ENCODE measurements at regions of chr10 and their contacts with region 1.

Region 1: DNA sequence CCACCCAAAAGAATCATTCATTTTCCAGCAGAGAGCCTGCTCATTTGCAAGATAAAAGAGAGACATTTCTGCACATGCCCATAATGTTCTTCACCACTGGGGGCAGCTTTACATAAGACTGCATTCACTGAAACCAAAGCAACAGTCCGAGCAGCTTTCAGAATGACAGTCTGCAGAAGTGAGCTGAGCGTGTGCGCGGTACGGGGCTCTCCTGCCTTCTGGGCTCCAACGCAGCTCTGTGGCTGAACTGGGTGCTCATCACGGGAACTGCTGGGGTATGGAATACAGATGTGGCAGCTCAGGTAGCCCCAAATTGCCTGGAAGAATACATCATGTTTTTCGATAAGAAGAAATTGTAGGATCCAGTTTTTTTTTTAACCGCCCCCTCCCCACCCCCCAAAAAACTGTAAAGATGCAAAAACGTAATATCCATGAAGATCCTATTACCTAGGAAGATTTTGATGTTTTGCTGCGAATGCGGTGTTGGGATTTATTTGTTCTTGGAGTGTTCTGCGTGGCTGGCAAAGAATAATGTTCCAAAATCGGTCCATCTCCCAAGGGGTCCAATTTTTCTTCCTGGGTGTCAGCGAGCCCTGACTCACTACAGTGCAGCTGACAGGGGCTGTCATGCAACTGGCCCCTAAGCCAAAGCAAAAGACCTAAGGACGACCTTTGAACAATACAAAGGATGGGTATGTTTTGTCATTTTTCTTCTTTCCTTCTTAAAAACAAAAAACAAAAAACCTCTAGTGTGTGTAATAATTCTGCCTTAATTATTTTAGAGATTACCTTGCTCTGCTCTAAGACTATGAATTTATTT is at the start of gene LRRTM3:
- DNase-seq: peak in 4 of 5 donors; percentile 20 to 31 (median 27)
- ATAC-seq: peak; percentile 83 to 95 (median 90)
- H3K4me3 ChIP-seq: peak within 1 kb of the TSS in 5 of 12 donors; percentile 9 to 28 (median 21)
- H3K27ac ChIP-seq: no peak within 1 kb of the TSS
- H3K4me1 ChIP-seq: peaks cover 0 to 18% (median 0%) of the 10 kb centered on the region in 12 donors
- H3K27me3 ChIP-seq: peaks cover 0 to 54% (median 4%) of the 10 kb centered on the region in 9 donors
- CTCF ChIP-seq: peak; percentile 32 to 69 (median 48)
- POLR2A ChIP-seq: no peak
- total RNA-seq, gene LRRTM3: not detected

Region 2: DNA sequence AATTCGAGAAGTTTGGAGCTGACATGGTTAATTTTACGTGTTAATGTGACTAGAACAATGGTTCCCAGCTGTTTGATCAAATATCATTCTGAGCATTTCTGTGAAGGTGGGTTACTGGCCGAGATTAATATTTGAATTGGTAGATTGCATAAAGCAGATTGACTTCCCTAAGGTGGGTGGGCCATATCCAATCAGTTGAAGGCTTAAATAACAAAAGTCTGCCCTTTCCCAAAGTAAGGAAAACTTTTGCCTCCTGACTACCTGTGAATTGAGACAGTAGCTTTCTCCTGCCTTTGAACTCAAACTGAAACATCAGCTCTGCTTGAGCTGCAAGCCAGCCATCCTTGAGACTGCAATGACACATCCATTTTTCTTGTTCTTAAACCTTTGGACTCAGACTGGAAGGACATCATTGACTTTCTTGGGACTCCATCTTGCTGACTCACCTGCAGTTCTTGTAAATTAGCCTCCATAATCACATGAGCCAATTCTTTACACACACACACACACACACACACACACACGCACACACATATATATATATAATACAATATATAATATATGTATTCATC is 63.3 kb before region 1 on chr10:
- intact Hi-C with region 1: no loop called
- DNase-seq: no peak
- ATAC-seq: no peak
- H3K4me3 ChIP-seq: no peak overlapping the region
- H3K27ac ChIP-seq: no peak overlapping the region
- H3K4me1 ChIP-seq: no peaks in the 10 kb centered on the region
- H3K27me3 ChIP-seq: no peaks in the 10 kb centered on the region
- CTCF ChIP-seq: no peak
- POLR2A ChIP-seq: no peak

Region 3: GRCh38 chr10:67520924-67521520 is 594.9 kb after region 1 on chr10:
- intact Hi-C with region 1: loop called in 4 of 10 experiments (anchors 10 kb)
- DNase-seq: peak in 2 of 5 donors; percentile 8 to 31
- ATAC-seq: peak; percentile 58 to 79 (median 74)
- H3K4me3 ChIP-seq: no peak overlapping the region
- H3K27ac ChIP-seq: no peak overlapping the region
- H3K4me1 ChIP-seq: peaks cover 0 to 4% (median 0%) of the 10 kb centered on the region in 12 donors
- H3K27me3 ChIP-seq: no peaks in the 10 kb centered on the region
- CTCF ChIP-seq: peak; percentile 44 to 78 (median 67)
- POLR2A ChIP-seq: no peak

Measured in heart left ventricle (tissue), 16 donors.